Calu3 (cell line): ENCODE measurements at regions of chr11 and their contacts with region 1.

Region 1: DNA sequence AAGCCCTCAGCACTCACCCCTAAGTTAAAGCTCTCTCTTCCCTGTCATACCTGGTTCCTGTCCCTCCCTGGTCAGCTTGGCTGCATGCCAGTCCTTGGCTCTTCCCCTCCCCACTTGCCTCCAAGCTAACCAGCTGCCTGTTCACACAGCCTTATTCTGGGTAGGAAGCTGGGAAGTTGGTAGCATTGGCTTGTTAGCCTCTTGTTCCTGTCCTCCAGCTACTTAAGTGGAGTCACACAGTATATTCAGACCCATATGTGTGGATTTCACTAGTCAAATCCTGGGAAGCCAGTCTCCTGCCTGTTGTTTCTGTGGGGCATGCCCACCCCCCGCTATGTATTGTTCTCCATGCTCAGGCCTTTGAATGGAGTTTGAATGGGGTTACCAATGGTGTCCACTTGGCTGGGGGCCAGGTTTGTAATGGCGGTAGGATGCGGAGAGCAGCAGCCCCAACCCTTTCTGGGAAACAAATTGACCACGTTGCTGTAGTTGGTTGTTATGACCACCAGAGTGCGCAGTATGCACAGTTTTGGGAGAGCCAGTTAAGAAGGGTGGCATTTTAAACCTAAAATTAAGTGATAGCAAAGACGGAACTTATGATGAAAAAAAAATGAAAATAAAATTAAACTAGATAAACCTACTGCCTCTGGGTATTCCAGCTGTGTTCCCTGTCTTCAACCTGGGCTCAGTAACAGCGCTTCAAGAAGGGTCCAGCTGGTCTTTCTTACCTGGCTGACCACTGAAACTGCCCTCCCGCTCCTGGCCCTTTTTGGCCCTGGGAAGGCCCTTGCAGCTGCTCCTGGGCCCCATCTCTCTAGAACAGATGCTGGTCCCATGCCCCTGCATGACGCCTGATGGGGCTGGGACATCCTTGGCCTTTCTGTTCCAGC is 10.7 kb upstream of the RPS3 start:
- DNase-seq: peak; percentile 74
- H3K4me3 Mint-ChIP-seq: no peak overlapping the region
- H3K27ac Mint-ChIP-seq: no peak overlapping the region
- H3K4me1 Mint-ChIP-seq: peaks cover 8% of the 10 kb centered on the region
- H3K27me3 Mint-ChIP-seq: no peaks in the 10 kb centered on the region
- CTCF ChIP-seq: peak; percentile 74

Region 2: GRCh38 chr11:75280227-75280701 is 108.4 kb before region 1 on chr11:
- CTCF ChIA-PET with region 1: interaction called, 9 read pairs
- intact Hi-C with region 1: loop called (anchors 1 kb)
- DNase-seq: peak; percentile 82
- H3K4me3 Mint-ChIP-seq: no peak overlapping the region
- H3K27ac Mint-ChIP-seq: no peak overlapping the region
- H3K4me1 Mint-ChIP-seq: peaks cover 9% of the 10 kb centered on the region
- H3K27me3 Mint-ChIP-seq: no peaks in the 10 kb centered on the region
- CTCF ChIP-seq: peak; percentile 93

Region 3: GRCh38 chr11:75328426-75329277 is 60.0 kb before region 1 on chr11:
- CTCF ChIA-PET with region 1: interaction called, 6 read pairs
- intact Hi-C with region 1: loop called (anchors 1 kb)
- DNase-seq: peak; percentile 67
- H3K4me3 Mint-ChIP-seq: no peak overlapping the region
- H3K27ac Mint-ChIP-seq: peak overlapping the region; percentile 7
- H3K4me1 Mint-ChIP-seq: peaks cover 38% of the 10 kb centered on the region
- H3K27me3 Mint-ChIP-seq: no peaks in the 10 kb centered on the region
- CTCF ChIP-seq: peak; percentile 71

Region 4: GRCh38 chr11:75342903-75343870 is 45.4 kb before region 1 on chr11:
- CTCF ChIA-PET with region 1: interaction called, 5 read pairs
- intact Hi-C with region 1: loop called (anchors 5 kb)
- DNase-seq: peak; percentile 53
- H3K4me3 Mint-ChIP-seq: peak overlapping the region; percentile 41
- H3K27ac Mint-ChIP-seq: peak overlapping the region; percentile 46
- H3K4me1 Mint-ChIP-seq: peaks cover 63% of the 10 kb centered on the region
- H3K27me3 Mint-ChIP-seq: no peaks in the 10 kb centered on the region
- CTCF ChIP-seq: no peak

Region 5: GRCh38 chr11:75508044-75508561 is 119.5 kb after region 1 on chr11:
- CTCF ChIA-PET with region 1: no interaction called
- intact Hi-C with region 1: no loop called
- DNase-seq: no peak
- H3K4me3 Mint-ChIP-seq: no peak overlapping the region
- H3K27ac Mint-ChIP-seq: no peak overlapping the region
- H3K4me1 Mint-ChIP-seq: no peaks in the 10 kb centered on the region
- H3K27me3 Mint-ChIP-seq: no peaks in the 10 kb centered on the region
- CTCF ChIP-seq: no peak

Region 6: DNA sequence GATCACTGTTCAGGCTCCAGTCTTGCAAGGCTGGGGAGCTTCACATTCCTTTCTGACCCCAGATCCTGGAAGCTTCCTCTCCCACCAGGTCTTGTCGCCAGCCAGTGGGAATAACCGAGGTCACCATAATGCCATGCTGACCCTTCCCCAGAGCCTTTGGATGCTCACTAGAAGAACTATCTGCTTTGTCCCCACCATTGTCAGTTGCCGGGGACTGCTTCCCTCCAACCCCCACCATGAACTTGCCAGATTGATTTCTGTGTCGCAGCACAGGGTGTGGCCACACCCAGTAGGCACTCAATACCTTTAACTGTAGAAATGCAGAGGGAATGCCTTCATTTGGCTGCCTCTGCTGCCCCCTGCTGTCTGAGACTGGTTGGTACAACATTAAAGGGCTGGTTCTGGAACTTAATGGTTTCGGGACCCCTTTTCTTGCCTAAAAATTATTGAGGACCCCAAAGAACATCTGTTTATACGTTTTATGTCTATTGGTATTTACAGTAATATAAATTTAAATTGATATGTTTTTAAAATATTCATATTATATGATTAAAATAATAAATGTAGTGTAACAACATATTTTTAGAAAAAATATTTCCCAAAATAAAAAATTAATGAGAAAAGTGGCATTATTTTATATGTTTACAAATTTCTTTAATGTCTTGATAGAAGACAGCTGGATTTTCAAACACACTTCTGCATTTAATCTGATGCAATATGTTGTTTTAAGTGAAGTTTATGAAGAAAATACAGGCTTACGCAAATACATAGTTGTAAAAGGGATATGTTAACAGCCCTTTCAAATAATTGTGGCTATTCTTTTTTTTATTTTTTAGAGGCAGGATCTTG is 143.8 kb after region 1 on chr11:
- CTCF ChIA-PET with region 1: interaction called, 3 read pairs
- intact Hi-C with region 1: loop called (anchors 1 kb)
- DNase-seq: peak; percentile 85
- H3K4me3 Mint-ChIP-seq: no peak overlapping the region
- H3K27ac Mint-ChIP-seq: no peak overlapping the region
- H3K4me1 Mint-ChIP-seq: peaks cover 14% of the 10 kb centered on the region
- H3K27me3 Mint-ChIP-seq: peaks cover 26% of the 10 kb centered on the region
- CTCF ChIP-seq: peak; percentile 85